ENCODE measurements at regions of chrX and their contacts with region 1.

Region 1: DNA sequence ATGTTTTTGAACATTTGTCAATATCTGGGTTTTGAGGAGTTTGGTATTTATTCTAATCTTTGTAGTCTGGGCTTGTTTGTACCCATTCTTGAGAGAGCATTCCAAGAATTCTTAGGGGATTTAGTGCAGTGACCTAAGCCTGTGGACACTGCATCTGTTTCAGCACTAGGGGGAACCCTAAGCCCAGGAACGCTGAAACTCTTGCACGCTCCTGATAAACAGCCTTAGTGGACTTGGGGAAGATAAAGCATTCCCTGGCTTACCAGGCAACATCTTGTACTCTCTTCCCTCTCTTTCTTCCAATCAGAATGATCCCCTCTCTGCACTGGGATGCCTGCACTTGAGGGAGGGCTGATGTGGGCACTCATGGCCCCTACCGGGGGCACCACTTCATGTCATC is 654.9 kb upstream of the HTR2C start:
- DNase-seq: peak; percentile 22 to 72
- H3K4me3 ChIP-seq: no peak overlapping the region
- H3K27ac ChIP-seq: no peak overlapping the region
- H3K4me1 ChIP-seq: no peaks in the 10 kb centered on the region
- H3K27me3 ChIP-seq: no peaks in the 10 kb centered on the region
- CTCF ChIP-seq: peak; percentile 92

Region 2: GRCh38 chrX:113529426-113530013 is 399.5 kb before region 1 on chrX:
- CTCF ChIA-PET with region 1: no interaction called
- POLR2A ChIA-PET with region 1: no interaction called
- intact Hi-C with region 1: no loop called
- DNase-seq: no peak
- H3K4me3 ChIP-seq: no peak overlapping the region
- H3K27ac ChIP-seq: no peak overlapping the region
- H3K4me1 ChIP-seq: no peaks in the 10 kb centered on the region
- H3K27me3 ChIP-seq: no peaks in the 10 kb centered on the region
- CTCF ChIP-seq: no peak

Region 3: DNA sequence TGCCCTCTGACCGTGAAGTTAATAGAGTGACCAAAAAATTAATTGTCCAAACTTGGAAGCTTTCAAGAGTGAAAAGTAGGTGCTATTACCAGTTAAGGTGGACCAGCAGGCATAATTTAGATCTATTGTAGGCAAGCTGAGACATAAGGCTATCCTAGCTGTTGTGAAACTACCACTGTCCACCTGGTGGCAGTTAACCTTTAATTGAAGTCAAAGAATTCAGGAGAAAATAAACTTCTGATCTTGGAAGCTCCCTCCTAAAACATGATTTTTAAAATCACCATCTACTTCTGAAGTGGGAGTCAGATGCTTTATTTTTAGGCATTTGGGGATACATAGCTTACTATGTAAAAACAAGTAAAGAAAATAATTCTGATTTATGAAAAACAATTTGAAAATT is 18.5 kb after region 1 on chrX:
- CTCF ChIA-PET with region 1: no interaction called
- POLR2A ChIA-PET with region 1: no interaction called
- intact Hi-C with region 1: no loop called
- DNase-seq: no peak
- H3K4me3 ChIP-seq: no peak overlapping the region
- H3K27ac ChIP-seq: no peak overlapping the region
- H3K4me1 ChIP-seq: no peaks in the 10 kb centered on the region
- H3K27me3 ChIP-seq: no peaks in the 10 kb centered on the region
- CTCF ChIP-seq: peak; percentile 51; the same call in 1 of the 2 replicates

Region 4: DNA sequence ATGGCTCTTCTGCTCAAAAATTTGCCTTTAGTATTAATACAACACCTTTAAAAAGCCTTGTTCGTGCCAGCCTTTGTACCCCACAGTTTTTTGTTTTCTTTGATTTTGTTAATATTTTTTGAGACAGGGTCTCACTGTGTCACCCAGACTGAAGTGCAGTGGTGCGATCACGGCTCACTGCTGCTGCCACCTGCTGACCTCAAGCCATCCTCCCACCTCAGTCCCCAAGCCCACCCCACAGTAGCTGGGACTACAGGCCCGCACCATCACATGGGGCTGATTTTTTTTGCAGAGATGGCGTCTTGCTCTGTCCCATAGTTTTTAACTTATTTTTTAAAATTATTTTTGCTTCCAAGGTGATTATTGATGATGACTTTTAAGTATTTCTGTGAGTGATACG is 788.9 kb after region 1 on chrX:
- CTCF ChIA-PET with region 1: no interaction called
- POLR2A ChIA-PET with region 1: no interaction called
- intact Hi-C with region 1: loop called (anchors 2 kb)
- DNase-seq: no peak
- H3K4me3 ChIP-seq: no peak overlapping the region
- H3K27ac ChIP-seq: no peak overlapping the region
- H3K4me1 ChIP-seq: no peaks in the 10 kb centered on the region
- H3K27me3 ChIP-seq: no peaks in the 10 kb centered on the region
- CTCF ChIP-seq: peak; percentile 56; the same call in 1 of the 2 replicates

Region 5: GRCh38 chrX:115147220-115147619 is 1218.2 kb after region 1 on chrX:
- CTCF ChIA-PET with region 1: no interaction called
- POLR2A ChIA-PET with region 1: no interaction called
- intact Hi-C with region 1: loop called (anchors 5 kb)
- DNase-seq: peak in 1 of 2 experiments; percentile 42
- H3K4me3 ChIP-seq: no peak overlapping the region
- H3K27ac ChIP-seq: no peak overlapping the region
- H3K4me1 ChIP-seq: no peaks in the 10 kb centered on the region
- H3K27me3 ChIP-seq: no peaks in the 10 kb centered on the region
- CTCF ChIP-seq: peak; percentile 77

Measured in PC-9 (cell line).